ENCODE measurements at regions of chr6 and their contacts with region 1.

Region 1: DNA sequence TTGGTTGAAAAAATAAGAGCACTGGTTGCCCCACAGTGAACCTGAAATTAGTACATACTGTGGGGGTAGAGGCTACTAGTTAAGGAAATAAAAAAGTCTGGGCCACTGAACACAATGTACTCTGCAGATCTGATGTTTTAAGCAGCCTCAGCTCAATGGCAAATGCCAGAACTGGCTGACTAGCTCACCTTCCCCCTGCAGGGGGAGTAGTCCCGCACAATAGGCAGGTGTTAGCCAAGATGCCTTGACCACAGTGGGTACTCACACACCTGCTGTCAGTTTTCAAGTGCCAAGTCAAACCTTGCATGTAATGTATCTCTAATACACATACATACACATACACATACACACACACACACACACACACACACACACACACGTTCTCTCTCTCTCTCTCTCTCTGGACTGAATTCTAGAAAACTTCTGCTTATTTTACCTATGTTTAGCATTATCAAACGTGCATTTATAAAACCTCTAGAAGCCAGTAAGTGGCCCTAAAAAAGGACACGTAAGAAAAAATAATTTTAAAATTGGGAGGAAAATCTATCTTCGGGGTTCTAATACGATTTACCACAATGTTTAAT is 36.1 kb downstream of the GMDS start:
- DNase-seq: peak; percentile 73 to 82
- H3K4me3 ChIP-seq: no peak overlapping the region
- H3K4me3 Mint-ChIP-seq: no peak overlapping the region
- H3K27ac Mint-ChIP-seq: no peak overlapping the region
- H3K4me1 ChIP-seq: no peaks in the 10 kb centered on the region
- H3K4me1 Mint-ChIP-seq: no peaks in the 10 kb centered on the region
- H3K27me3 ChIP-seq: no peaks in the 10 kb centered on the region
- H3K27me3 Mint-ChIP-seq: no peaks in the 10 kb centered on the region
- CTCF ChIP-seq: peak; percentile 63 to 84

Region 2: DNA sequence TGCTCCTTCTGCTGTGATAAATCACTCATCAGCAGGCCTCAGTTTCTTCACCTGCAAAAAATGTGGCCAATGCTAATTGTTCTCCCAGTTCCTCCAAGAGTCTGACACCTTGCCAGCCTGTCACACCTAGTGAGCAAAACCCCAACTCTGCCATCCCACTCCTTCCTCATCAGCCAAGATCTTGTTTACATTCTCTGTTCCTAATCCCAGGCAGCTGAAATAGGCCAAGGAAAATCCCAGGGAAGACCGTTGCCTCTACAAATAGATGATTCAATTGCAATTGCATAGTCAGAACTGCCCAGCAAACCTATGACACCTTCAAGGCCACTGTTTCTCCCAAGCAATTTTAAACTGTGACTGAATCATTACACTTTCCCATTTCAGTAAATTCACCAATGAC is 42.6 kb before region 1 on chr6:
- CTCF ChIA-PET with region 1: no interaction called
- POLR2A ChIA-PET with region 1: no interaction called
- intact Hi-C with region 1: no loop called
- DNase-seq: no peak
- H3K4me3 ChIP-seq: no peak overlapping the region
- H3K4me3 Mint-ChIP-seq: no peak overlapping the region
- H3K27ac Mint-ChIP-seq: no peak overlapping the region
- H3K4me1 ChIP-seq: no peaks in the 10 kb centered on the region
- H3K4me1 Mint-ChIP-seq: no peaks in the 10 kb centered on the region
- H3K27me3 ChIP-seq: no peaks in the 10 kb centered on the region
- H3K27me3 Mint-ChIP-seq: no peaks in the 10 kb centered on the region
- CTCF ChIP-seq: no peak

Region 3: DNA sequence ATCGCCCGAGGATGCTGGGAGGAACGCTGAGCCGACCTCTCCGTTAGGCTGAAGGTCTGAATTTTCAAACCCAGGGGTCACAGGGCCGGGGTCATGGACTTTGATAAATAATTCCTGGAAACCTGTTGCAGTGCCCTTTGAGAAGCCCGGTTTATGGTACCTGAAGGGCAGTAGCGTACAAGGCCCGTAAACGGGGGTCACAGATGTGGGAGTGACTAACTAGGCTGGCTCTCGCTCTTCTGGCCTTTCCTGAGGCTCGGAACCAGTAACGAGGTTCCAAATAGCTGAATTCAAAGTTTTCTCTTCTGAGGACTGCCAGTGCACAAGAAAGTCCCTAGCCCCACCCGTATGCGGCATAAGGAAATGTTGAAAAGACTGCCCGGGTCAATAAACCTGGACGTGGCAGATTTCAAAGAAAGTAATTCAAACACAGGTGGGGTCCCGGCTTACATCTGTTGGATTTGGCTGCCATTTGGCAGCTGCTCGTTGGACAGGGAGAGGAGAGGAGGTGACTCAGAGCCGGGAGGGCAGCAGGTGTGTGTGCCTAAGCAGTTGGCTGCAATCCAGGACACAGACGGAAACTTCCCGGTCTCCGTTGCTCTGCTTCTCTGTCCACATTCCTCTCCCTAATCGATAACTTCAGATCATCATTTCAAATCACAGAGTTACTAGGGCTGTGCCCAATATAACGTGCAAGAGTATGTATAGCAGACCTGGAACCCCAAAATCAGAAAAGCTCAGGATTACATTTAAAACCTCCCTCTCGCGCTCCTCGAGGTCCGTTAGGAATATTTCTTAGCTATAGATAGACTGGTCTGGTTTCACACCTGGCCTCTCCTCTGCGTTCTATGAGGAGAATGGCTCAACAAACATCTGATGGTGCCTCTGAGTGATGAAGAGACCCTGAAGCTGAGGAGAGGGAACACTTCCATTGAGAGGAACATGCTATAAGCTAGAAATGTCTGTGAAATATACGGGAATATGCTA is 36.9 kb after region 1 on chr6:
- CTCF ChIA-PET with region 1: interaction called, 3 read pairs
- POLR2A ChIA-PET with region 1: interaction called, 3 read pairs
- intact Hi-C with region 1: loop called (anchors 2 kb)
- DNase-seq: peak; percentile 71 to 82
- H3K4me3 ChIP-seq: peak overlapping the region; percentile 50
- H3K4me3 Mint-ChIP-seq: peak overlapping the region; percentile 88
- H3K27ac Mint-ChIP-seq: peak overlapping the region; percentile 95
- H3K4me1 ChIP-seq: peaks cover 5% of the 10 kb centered on the region; the same call in 1 of the 2 replicates
- H3K4me1 Mint-ChIP-seq: peaks cover 17% of the 10 kb centered on the region
- H3K27me3 ChIP-seq: no peaks in the 10 kb centered on the region
- H3K27me3 Mint-ChIP-seq: no peaks in the 10 kb centered on the region
- CTCF ChIP-seq: no peak

Region 4: GRCh38 chr6:2353412-2354137 is 144.3 kb after region 1 on chr6:
- CTCF ChIA-PET with region 1: interaction called, 60 read pairs
- POLR2A ChIA-PET with region 1: no interaction called
- intact Hi-C with region 1: loop called (anchors 1 kb)
- DNase-seq: peak; percentile 61 to 75
- H3K4me3 ChIP-seq: no peak overlapping the region
- H3K4me3 Mint-ChIP-seq: no peak overlapping the region
- H3K27ac Mint-ChIP-seq: no peak overlapping the region
- H3K4me1 ChIP-seq: peaks cover 7% of the 10 kb centered on the region; the same call in 1 of the 2 replicates
- H3K4me1 Mint-ChIP-seq: peaks cover 8% of the 10 kb centered on the region
- H3K27me3 ChIP-seq: no peaks in the 10 kb centered on the region
- H3K27me3 Mint-ChIP-seq: no peaks in the 10 kb centered on the region
- CTCF ChIP-seq: peak; percentile 75 to 79

Region 5: GRCh38 chr6:2514965-2515555 is 305.7 kb after region 1 on chr6:
- CTCF ChIA-PET with region 1: no interaction called
- POLR2A ChIA-PET with region 1: no interaction called
- intact Hi-C with region 1: no loop called
- DNase-seq: peak; percentile 91 to 96
- H3K4me3 ChIP-seq: peak overlapping the region; percentile 13
- H3K4me3 Mint-ChIP-seq: peak overlapping the region; percentile 72
- H3K27ac Mint-ChIP-seq: peak overlapping the region; percentile 95
- H3K4me1 ChIP-seq: peaks cover 59% of the 10 kb centered on the region
- H3K4me1 Mint-ChIP-seq: peaks cover 26% of the 10 kb centered on the region
- H3K27me3 ChIP-seq: no peaks in the 10 kb centered on the region
- H3K27me3 Mint-ChIP-seq: no peaks in the 10 kb centered on the region
- CTCF ChIP-seq: no peak